ENCODE measurements at regions of chr2 and their contacts with region 1.

Region 1: DNA sequence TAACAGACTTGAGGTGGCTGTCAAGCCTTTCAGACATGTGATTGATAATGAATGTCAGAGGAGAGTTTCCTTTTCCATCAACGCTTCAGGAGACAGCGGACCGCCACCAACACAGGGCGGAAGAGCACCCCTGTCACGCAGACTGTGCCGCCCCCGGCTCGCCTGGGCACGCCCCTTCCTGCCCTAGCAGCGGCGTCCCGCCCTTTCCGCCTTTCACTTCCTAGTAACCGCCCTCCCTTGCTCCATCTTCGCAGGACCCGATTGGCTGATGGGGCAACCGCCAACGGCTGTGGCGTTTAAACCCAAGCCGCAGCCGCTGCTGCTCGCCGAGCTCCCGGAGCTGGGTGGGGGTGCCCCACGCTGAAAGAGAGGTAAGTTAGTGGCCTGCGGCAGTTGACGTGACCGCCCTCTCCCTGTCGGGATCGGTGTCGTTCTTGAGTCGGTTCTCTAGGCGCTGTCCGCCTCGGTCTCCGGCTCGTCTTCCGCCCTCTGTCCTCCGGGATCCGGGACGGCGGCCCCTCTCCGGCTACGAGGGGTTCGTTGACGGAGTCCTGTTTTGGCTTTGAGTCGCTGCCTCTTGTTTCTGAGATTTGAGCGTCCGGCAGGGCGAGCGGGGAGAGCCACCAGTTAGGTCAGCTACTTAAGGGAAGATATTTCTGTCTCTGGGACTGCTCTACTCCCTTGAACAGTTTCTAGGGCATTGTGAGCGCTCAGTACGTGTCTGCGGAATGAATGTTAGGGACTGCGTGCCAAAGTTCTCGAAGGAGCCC is at the start of gene SGO2:
- DNase-seq: peak; percentile 90 to 96 (median 94)
- ATAC-seq: peak; percentile 99
- H3K4me3 Mint-ChIP-seq: peak within 1 kb of the TSS; percentile 85 to 97 (median 95)
- H3K27ac Mint-ChIP-seq: peak within 1 kb of the TSS; percentile 66 to 92 (median 90)
- H3K4me1 Mint-ChIP-seq: peaks cover 3 to 20% (median 11%) of the 10 kb centered on the region in 4 donors
- H3K27me3 Mint-ChIP-seq: peaks cover 0 to 6% (median 0%) of the 10 kb centered on the region in 5 donors
- polyA plus RNA-seq, gene SGO2: 0.66 to 2.4 (median 2.4) TPM

Region 2: GRCh38 chr2:200509612-200510433 is 16.2 kb before region 1 on chr2 and contains the start of gene KCTD18:
- POLR2A ChIA-PET with region 1: interaction called, 20 read pairs
- DNase-seq: peak; percentile 83 to 93 (median 90)
- ATAC-seq: peak; percentile 97 to 98
- H3K4me3 Mint-ChIP-seq: peak within 1 kb of the TSS; percentile 80 to 97 (median 94)
- H3K27ac Mint-ChIP-seq: peak within 1 kb of the TSS; percentile 83 to 98 (median 94)
- H3K4me1 Mint-ChIP-seq: peaks cover 14 to 45% (median 32%) of the 10 kb centered on the region in 4 donors
- H3K27me3 Mint-ChIP-seq: no peaks in the 10 kb centered on the region
- polyA plus RNA-seq, gene KCTD18: 12.6 to 16.5 (median 14.0) TPM

Measured in naive thymus-derived CD8-positive, alpha-beta T cell (primary cell).